Thyroid gland (tissue), 4 donors: ENCODE measurements at regions of chr14 and their contacts with region 1.

Region 1: GRCh38 chr14:70907176-70907995 is at the start of gene PCNX1:
- DNase-seq: peak; percentile 90 to 92
- H3K4me3 ChIP-seq: peak within 1 kb of the TSS; percentile 83 to 93 (median 84)
- H3K27ac ChIP-seq: peak within 1 kb of the TSS; percentile 89 to 96 (median 95)
- H3K4me1 ChIP-seq: peaks cover 17 to 25% of the 10 kb centered on the region in 2 donors
- H3K27me3 ChIP-seq: no peaks in the 10 kb centered on the region
- CTCF ChIP-seq: peak; percentile 49 to 98 (median 89)
- POLR2A ChIP-seq: peak in 1 of 2 donors; percentile 84
- total RNA-seq, gene PCNX1: 43.8 to 78.5 (median 69.7) TPM

Region 2: DNA sequence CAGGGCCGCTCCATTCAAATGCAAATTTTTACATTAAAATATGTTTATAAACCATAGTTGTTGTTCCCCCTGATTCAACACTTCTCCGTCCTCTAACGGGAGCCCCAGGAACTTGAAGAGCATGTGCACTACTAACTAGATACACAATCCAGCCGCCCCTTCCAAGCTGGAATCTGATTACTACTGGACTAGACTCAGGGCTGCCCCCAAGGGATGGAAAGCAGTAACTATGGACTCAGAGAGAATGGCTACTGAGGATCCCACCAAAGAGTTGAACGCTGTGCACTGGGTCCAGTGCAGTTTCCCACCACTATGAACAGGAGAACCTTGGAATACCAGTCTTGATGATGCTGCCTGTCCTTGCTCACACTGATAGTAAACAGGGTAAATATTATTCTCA is 48.8 kb before region 1 on chr14:
- intact Hi-C with region 1: no loop called
- DNase-seq: no peak
- H3K4me3 ChIP-seq: no peak overlapping the region
- H3K27ac ChIP-seq: no peak overlapping the region
- H3K4me1 ChIP-seq: no peaks in the 10 kb centered on the region
- H3K27me3 ChIP-seq: no peaks in the 10 kb centered on the region
- CTCF ChIP-seq: no peak
- POLR2A ChIP-seq: no peak

Region 3: GRCh38 chr14:70972107-70972976 is 65.0 kb after region 1 on chr14:
- intact Hi-C with region 1: loop called (anchors 5 kb)
- DNase-seq: peak; percentile 85 to 91
- H3K4me3 ChIP-seq: no peak overlapping the region
- H3K27ac ChIP-seq: no peak overlapping the region
- H3K4me1 ChIP-seq: no peaks in the 10 kb centered on the region
- H3K27me3 ChIP-seq: no peaks in the 10 kb centered on the region
- CTCF ChIP-seq: peak; percentile 84 to 96 (median 86)
- POLR2A ChIP-seq: no peak